Heart right ventricle (tissue), 16 donors: ENCODE measurements at regions of chr10 and their contacts with region 1.

Region 1: DNA sequence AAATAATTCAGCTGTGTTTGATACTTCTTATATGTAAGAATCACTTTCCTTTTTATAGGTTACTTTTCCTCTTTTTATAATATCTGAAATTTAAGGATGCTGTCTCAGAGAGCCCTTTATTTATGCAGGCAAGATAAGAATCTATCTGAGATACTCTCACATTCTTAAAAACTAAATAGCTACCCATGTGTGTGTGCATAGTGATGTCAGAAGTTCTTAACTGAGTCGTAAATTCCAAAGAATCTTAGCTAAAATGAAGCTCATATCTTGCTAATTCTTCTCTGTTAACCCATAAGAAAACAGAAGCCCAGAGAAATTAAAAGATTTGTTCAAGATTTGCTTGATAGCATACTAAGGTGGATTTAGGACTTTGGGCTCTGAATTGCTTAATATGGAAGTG is 118.5 kb downstream of the PCDH15 start:
- DNase-seq: no peak
- ATAC-seq: no peak
- H3K4me3 ChIP-seq: no peak overlapping the region
- H3K27ac ChIP-seq: no peak overlapping the region
- H3K4me1 ChIP-seq: no peaks in the 10 kb centered on the region
- H3K27me3 ChIP-seq: no peaks in the 10 kb centered on the region
- CTCF ChIP-seq: no peak

Region 2: DNA sequence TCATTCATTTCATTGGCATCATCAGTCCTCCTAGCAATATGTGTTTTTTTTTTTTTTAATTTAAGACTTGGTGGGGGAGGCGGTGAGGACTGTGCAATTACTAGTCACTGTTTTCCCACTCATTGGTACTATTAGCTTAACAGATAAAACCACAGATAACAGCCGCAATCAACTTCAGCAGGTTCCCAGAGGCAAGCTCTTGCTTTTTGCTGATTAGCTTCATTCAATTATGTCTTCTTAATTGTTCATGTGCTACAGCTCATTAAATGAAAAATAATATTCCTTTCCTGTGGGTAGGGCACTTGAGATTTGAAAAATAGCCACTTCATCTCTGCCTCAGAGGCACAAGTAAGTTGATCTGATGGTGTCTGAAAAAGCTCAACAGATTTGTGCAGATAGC is 97.0 kb before region 1 on chr10:
- intact Hi-C with region 1: no loop called
- DNase-seq: no peak
- ATAC-seq: no peak
- H3K4me3 ChIP-seq: no peak overlapping the region
- H3K27ac ChIP-seq: no peak overlapping the region
- H3K4me1 ChIP-seq: no peaks in the 10 kb centered on the region
- H3K27me3 ChIP-seq: no peaks in the 10 kb centered on the region
- CTCF ChIP-seq: no peak

Region 3: GRCh38 chr10:54666192-54666591 is 16.4 kb before region 1 on chr10:
- intact Hi-C with region 1: loop called in 1 of 10 experiments (anchors 1 kb)
- DNase-seq: no peak
- ATAC-seq: no peak
- H3K4me3 ChIP-seq: no peak overlapping the region
- H3K27ac ChIP-seq: no peak overlapping the region
- H3K4me1 ChIP-seq: no peaks in the 10 kb centered on the region
- H3K27me3 ChIP-seq: no peaks in the 10 kb centered on the region
- CTCF ChIP-seq: no peak